Left cardiac atrium (tissue), 4 donors: ENCODE measurements at regions of chr14 and their contacts with region 1.

Region 1: GRCh38 chr14:32939254-32940065 is 781 bp downstream of the NPAS3 start:
- DNase-seq: peak; percentile 74
- ATAC-seq: peak; percentile 89 to 96

Region 2: GRCh38 chr14:32710731-32711680 is 228.5 kb before region 1 on chr14:
- intact Hi-C with region 1: loop called in 1 of 2 experiments (anchors 10 kb)
- DNase-seq: no peak
- ATAC-seq: peak in 1 of 2 donors; percentile 27

Region 3: DNA sequence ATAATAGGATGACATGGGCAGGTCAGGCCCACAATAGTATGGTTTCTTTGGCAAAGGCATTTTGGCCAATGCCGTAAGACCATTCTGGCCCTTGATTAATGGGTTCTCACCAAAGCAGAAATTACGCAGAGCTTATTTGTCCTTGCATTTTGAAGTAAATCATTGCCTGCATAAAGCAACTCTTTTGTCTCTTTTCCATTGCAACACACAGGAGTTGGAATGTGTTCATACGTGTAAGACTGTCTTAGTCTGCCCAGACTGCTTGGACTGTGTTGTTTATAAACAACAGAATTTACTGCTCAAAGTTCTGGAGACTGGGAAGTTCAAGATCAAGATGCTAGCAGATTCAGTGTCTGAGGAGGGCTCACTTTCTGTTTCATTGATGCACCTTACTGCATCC is 103.5 kb before region 1 on chr14:
- intact Hi-C with region 1: loop called in 1 of 2 experiments (anchors 10 kb)
- DNase-seq: no peak
- ATAC-seq: no peak

Region 4: DNA sequence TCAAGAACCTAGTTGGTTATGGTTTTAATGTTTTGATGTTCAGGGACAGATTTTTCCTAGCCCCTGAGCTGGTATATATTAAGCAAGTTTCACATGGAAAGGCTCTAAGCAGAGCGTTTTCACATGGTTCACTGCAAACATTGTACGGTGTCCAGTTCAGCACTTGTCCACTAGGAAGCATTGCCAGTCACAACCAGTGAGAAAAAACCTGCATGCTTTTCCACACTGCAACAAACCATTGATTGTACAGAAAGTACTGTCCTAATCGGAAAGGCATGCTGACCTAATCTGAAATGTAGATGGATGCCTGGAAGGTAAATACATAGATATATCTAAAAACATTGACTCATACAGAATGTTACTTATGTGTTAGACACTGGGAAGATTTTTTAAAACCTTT is 25.7 kb before region 1 on chr14:
- intact Hi-C with region 1: no loop called
- DNase-seq: no peak
- ATAC-seq: no peak